ENCODE measurements at regions of chr17 and their contacts with region 1.

Region 1: DNA sequence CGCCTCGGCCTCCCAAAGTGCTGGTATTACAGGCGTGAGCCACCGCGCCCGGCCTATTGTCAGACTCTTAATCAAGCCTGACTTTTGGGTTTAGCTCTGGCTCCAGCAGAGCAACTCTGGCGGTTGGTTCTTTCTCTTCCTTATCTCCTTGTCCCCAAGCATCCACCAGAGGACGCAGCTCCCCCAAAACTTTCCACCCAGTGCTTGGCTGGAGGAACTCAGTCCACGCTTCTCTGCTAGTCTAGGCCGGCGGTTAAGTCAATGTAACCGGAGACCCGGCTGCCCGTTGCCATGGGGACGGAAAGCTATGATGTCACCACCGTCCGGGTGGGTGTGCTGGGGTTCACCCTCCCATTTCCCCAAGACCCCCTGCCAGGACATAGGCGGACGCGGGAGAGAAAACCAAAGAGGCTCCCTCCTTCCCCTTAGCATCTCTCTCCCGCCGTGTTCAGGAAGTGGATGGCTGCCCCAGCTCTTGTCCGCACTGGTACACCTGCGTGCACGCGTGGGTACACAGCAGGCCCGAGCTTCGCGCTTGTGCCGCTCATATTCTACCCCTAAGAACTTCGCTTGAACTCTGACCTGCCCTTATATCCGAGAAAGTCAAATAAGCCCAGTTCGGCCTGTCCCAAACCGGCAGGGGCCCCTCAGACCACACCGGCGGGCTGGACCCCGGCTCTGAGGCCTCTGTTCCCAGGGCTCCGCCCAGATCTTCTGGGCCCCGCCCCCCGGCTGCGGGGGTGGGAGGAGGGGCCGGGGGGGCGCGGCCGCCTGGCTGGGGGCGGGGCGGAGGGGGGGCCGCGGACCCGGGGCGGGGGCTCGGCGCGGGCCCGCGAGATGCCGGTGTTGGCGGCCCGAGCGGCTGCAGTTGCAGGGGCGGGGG is at the start of gene RND2:
- DNase-seq: peak; percentile 56
- H3K4me3 ChIP-seq: peak within 1 kb of the TSS; percentile 66
- CTCF ChIP-seq: peak; percentile 84

Region 2: GRCh38 chr17:42798383-42799380 is 226.0 kb before region 1 on chr17 and contains the starts of genes CNTD1 and COA3:
- CTCF ChIA-PET with region 1: no interaction called
- POLR2A ChIA-PET with region 1: no interaction called
- DNase-seq: no peak
- H3K4me3 ChIP-seq: peak within 1 kb of the TSS; percentile 89
- CTCF ChIP-seq: no peak

Region 3: DNA sequence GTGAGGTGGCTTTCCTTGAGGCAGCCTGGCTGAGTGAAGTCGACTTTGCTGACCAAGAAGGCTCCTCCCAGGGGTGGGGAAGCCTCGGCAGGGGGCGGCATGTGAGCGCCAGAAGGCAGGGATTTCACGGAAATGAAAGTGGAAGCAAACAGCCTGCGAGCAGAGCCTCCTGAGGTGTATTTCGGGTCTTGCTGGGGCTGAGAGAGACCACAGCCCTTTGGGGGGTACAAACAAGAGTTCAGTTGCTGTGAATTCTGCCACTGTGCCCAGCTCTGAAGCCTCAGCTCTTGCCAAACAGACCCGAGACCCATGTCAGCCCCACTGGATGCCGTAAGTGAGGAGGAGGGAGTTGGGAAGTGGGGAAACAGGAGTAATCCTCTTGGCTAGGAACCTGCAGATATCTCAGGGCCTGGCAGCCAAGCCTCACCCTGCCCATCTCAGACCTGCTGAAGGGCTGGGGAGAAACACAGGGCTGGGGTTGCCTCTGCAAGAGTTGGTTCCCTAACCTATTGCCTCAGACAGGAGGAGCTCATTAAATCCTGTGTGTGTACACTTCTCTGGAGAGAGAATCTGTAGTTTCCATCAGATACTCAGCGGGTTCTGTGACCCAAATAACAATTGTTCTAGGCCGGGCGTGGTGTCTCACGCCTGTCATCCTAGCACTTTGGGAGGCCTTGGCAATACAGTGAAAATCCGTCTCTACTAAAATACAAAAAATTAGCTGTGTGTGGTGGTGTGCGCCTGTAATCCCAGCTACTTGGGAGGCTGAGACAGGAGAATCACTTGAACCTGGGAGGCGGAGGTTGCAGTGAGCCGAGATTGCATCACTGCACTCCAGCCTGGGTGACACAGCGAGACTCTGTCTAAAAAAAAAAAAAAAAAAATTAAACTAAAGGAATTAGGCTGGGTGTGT is 17.8 kb before region 1 on chr17 and contains the start of gene IFI35:
- CTCF ChIA-PET with region 1: interaction called, 16 read pairs
- POLR2A ChIA-PET with region 1: interaction called, 5 read pairs
- DNase-seq: no peak
- H3K4me3 ChIP-seq: peak within 1 kb of the TSS; percentile 77
- CTCF ChIP-seq: peak; percentile 44

Region 4: DNA sequence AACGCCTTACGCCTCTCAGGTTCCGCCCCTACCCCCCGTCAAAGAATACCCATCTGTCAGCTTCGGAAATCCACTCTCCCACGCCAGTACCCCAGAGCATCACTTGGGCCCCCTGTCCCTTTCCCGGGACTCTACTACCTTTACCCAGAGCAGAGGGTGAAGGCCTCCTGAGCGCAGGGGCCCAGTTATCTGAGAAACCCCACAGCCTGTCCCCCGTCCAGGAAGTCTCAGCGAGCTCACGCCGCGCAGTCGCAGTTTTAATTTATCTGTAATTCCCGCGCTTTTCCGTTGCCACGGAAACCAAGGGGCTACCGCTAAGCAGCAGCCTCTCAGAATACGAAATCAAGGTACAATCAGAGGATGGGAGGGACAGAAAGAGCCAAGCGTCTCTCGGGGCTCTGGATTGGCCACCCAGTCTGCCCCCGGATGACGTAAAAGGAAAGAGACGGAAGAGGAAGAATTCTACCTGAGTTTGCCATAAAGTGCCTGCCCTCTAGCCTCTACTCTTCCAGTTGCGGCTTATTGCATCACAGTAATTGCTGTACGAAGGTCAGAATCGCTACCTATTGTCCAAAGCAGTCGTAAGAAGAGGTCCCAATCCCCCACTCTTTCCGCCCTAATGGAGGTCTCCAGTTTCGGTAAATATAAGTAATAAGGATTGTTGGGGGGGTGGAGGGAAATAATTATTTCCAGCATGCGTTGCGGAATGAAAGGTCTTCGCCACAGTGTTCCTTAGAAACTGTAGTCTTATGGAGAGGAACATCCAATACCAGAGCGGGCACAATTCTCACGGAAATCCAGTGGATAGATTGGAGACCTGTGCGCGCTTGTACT is 100.7 kb after region 1 on chr17 and contains the start of gene BRCA1:
- CTCF ChIA-PET with region 1: interaction called, 14 read pairs
- POLR2A ChIA-PET with region 1: no interaction called
- DNase-seq: peak; percentile 91
- H3K4me3 ChIP-seq: peak within 1 kb of the TSS; percentile 95
- CTCF ChIP-seq: no peak

Region 5: DNA sequence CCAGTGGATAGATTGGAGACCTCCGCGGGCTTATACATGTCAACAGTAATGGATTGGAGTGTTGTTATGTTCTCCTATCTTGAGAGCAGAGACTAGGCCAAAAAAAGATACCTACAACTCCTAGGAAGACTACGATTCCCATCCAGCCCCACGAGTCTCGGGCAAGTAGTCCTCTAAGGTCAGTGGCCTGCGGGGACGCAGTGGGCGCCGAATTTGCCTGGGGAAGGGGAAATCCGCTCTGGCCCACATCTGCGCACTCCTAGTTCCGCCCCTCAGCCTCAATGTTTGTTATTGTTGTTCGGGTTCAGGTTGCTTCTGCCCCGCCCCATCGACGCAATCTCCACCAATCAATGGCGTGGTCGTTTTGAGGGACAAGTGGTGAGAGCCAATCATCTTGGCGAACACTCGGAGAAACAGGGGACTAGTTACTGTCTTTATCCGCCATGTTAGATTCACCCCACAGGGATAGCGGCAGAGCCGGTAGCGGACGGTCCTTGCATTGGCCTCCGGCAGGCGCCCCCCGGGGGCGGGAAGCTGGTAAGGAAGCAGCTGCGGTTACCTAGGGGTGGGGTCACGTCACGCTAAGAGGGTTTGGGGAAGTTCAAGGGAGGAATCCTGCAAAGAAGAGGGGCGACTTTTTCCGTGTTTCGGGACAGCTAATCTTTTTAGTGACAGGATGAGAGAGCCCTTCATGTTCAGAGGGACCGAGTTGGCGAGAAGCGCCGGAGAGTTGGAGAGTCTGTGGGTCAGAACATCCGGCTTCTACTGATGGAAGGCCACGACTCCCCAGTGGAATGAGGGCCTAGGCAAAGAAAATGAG is 146.3 kb after region 1 on chr17 and contains the start of gene NBR1:
- CTCF ChIA-PET with region 1: interaction called, 14 read pairs
- POLR2A ChIA-PET with region 1: interaction called, 9 read pairs
- DNase-seq: peak; percentile 92
- H3K4me3 ChIP-seq: peak within 1 kb of the TSS; percentile 85
- CTCF ChIP-seq: no peak

Region 6: DNA sequence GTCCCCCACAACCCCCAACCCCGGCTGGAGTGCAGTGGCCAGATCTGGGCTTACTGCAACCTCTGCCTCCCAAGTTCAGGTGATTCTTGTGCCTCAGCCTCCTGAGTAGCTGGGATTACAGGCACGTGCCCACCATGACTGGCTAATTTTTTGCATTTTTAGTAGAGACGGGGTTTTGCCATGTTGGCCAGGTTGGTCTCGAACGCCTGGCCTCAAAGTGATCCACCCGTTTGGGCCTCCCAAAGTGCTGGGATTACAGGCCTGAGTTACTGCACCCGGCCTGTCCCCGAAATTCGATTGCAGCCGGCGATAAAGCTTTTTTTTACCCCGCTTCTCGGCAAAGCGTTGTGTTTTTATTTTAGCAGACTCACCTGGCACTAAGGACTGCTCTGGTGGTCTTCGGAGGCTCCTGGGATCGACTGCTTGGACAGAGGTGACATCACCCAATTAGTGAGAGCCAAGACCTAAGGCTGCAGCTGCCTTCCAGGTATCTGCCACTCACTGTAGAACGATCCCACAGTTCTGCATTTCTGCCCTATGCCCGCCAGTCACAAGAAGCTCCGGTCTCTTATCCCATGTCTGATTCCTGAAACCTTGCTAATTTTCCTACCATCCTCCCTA is 292.0 kb after region 1 on chr17:
- CTCF ChIA-PET with region 1: interaction called, 4 read pairs
- POLR2A ChIA-PET with region 1: interaction called, 14 read pairs
- DNase-seq: no peak
- H3K4me3 ChIP-seq: no peak overlapping the region
- CTCF ChIP-seq: no peak

Measured in AG04449 (cell line).